Body of pancreas (tissue), 4 donors: ENCODE measurements at regions of chr14 and their contacts with region 1.

Region 1: DNA sequence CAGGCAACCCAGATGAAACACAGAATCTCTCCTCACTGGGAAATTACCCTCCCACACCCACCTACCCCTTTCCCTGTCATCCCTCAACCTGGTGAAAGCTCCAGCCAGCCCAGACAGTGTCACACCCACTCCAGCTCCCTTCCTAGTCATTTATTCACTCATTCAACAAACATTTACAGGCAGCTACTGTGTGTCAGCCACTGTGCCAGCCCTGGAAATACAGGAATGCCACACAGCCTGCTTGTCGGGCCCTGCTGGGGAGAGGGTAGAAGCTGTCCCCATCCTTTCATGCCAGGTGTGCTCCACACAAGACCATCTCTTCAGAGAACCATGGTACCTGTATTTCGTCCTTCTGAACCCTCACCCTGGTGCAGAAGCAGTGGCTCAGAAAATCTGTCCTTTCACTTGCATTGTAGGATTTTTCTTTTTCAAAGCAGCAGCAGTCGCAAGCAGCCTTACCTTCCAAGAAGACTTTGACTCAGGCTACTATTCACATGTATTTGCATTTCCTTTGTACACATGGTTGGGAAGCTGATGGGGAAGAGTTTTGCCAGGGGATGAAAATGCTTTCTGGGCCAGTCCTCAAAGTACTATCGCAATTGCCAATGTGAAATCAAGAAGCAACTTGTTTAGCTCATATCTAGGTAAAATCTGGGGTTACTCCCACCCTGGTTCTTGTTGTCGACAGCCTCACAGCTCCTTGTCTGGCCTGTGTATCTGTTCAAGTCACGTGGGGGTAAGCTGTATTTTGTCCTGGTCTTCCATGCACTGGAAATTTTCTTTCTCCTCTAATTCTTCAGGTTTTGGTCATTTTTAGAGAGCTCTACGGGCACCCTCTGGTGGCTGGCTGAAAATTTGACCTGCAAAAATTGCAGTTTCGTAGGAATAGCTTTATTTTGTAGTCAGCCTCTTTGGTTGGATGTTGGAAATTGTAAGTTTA is 147.4 kb upstream of the EGLN3 start:
- DNase-seq: peak; percentile 35 to 44 (median 37)
- ATAC-seq: peak; percentile 63
- H3K4me3 ChIP-seq: no peak overlapping the region
- H3K27ac ChIP-seq: no peak overlapping the region
- H3K4me1 ChIP-seq: no peaks in the 10 kb centered on the region
- H3K27me3 ChIP-seq: no peaks in the 10 kb centered on the region
- CTCF ChIP-seq: peak; percentile 20 to 75 (median 65)
- POLR2A ChIP-seq: no peak

Region 2: GRCh38 chr14:34227834-34228649 is 129.7 kb after region 1 on chr14:
- intact Hi-C with region 1: loop called (anchors 10 kb)
- DNase-seq: peak; percentile 66 to 71 (median 68)
- ATAC-seq: peak; percentile 89
- H3K4me3 ChIP-seq: no peak overlapping the region
- H3K27ac ChIP-seq: no peak overlapping the region
- H3K4me1 ChIP-seq: peaks cover under 1% of the 10 kb centered on the region
- H3K27me3 ChIP-seq: no peaks in the 10 kb centered on the region
- CTCF ChIP-seq: peak; percentile 59 to 86 (median 78)
- POLR2A ChIP-seq: no peak